ENCODE measurements at regions of chr1 and their contacts with region 1.

Region 1: GRCh38 chr1:78676347-78676982 is 26.8 kb downstream of the IFI44 start:
- DNase-seq: peak; percentile 38
- H3K4me3 ChIP-seq: no peak overlapping the region
- H3K27ac ChIP-seq: no peak overlapping the region
- H3K4me1 ChIP-seq: no peaks in the 10 kb centered on the region
- H3K27me3 ChIP-seq: no peaks in the 10 kb centered on the region
- CTCF ChIP-seq: peak; percentile 75 to 92 (median 83)
- EP300 ChIP-seq: no peak
- POLR2A ChIP-seq: no peak

Region 2: DNA sequence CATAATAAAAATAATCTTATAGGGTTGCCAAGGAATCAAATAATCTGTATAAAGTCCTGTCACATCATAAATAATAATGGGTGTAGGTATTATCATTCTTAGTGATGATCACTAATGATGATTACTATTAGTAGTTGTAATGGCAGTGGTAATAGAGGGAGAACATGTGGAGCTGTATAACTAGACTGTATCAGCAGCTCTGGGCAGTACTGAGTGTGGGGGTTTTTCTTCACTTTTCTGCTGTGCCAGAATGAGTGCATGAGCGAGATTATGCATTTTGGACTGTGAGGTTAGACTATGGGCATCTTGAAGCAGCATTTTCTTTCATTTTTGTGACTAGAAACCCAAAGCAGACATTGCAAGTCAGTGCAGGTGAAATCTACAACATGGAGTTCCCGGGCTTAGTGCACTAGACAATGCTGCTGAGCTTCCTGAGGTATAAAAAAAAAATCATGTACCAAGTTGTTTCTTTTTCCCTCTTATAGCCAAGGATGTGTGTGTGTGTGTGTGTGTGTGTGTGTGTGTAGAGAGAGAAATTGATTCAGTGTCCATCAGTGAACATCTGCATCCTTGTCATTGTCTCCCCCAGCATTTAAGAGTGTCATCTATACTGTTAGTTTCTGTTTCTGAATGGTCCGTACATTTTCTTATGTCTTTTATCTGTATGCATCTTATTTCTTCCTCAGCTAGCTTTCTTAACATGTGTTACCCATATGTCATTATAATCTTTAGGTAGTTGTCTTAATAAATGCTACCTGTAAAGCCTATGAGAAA is 544.1 kb before region 1 on chr1:
- in situ Hi-C with region 1: loop called in 1 of 4 experiments (anchors 10 kb)
- intact Hi-C with region 1: no loop called
- DNase-seq: no peak
- H3K4me3 ChIP-seq: no peak overlapping the region
- H3K27ac ChIP-seq: no peak overlapping the region
- H3K4me1 ChIP-seq: no peaks in the 10 kb centered on the region
- H3K27me3 ChIP-seq: no peaks in the 10 kb centered on the region
- CTCF ChIP-seq: no peak
- EP300 ChIP-seq: no peak
- POLR2A ChIP-seq: no peak

Region 3: DNA sequence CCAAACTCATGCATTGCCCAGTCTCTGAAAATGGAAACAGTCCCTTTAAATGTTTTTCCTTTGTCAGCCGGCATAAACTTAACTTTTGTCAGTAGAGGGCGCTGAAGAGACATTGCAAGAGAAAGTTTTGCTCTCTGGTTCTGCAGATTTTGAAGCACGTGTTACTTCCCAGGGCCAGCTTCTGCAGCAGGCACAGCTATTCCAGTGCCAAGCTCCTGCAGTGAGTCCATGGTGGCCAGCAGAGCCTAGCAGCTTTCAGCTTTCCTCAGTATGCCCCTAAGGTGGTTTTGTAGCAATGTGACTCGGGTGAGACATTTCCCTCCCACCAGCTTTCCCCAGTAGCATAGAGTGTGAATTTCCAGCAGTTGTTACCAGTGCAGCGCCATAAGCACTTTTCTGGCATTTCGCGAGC is 58.8 kb before region 1 on chr1:
- in situ Hi-C with region 1: loop called in 2 of 4 experiments (anchors 10 kb)
- intact Hi-C with region 1: loop called (anchors 5 kb)
- DNase-seq: peak; percentile 48
- H3K4me3 ChIP-seq: no peak overlapping the region
- H3K27ac ChIP-seq: no peak overlapping the region
- H3K4me1 ChIP-seq: peaks cover 0 to 24% (median 6%) of the 10 kb centered on the region in 4 donors
- H3K27me3 ChIP-seq: no peaks in the 10 kb centered on the region
- CTCF ChIP-seq: peak; percentile 77 to 91 (median 86)
- EP300 ChIP-seq: no peak
- POLR2A ChIP-seq: no peak

Region 4: GRCh38 chr1:78950801-78951200 is 274.3 kb after region 1 on chr1:
- in situ Hi-C with region 1: no loop called
- intact Hi-C with region 1: no loop called
- DNase-seq: no peak
- H3K4me3 ChIP-seq: no peak overlapping the region
- H3K27ac ChIP-seq: no peak overlapping the region
- H3K4me1 ChIP-seq: no peaks in the 10 kb centered on the region
- H3K27me3 ChIP-seq: no peaks in the 10 kb centered on the region
- CTCF ChIP-seq: no peak
- EP300 ChIP-seq: no peak
- POLR2A ChIP-seq: no peak